ENCODE measurements at regions of chr9 and their contacts with region 1.

Region 1: GRCh38 chr9:122168356-122168755 is 8.6 kb downstream of the MORN5 start:
- DNase-seq: no peak
- H3K4me3 ChIP-seq: no peak overlapping the region
- H3K4me3 Mint-ChIP-seq: no peak overlapping the region
- H3K27ac ChIP-seq: no peak overlapping the region
- H3K27ac Mint-ChIP-seq: no peak overlapping the region
- H3K4me1 ChIP-seq: no peaks in the 10 kb centered on the region
- H3K4me1 Mint-ChIP-seq: no peaks in the 10 kb centered on the region
- H3K27me3 ChIP-seq: peaks cover 0 to 2% of the 10 kb centered on the region in 2 donors
- H3K27me3 Mint-ChIP-seq: peaks cover 15 to 18% (median 18%) of the 10 kb centered on the region in 3 donors
- CTCF ChIP-seq: no peak

Region 2: DNA sequence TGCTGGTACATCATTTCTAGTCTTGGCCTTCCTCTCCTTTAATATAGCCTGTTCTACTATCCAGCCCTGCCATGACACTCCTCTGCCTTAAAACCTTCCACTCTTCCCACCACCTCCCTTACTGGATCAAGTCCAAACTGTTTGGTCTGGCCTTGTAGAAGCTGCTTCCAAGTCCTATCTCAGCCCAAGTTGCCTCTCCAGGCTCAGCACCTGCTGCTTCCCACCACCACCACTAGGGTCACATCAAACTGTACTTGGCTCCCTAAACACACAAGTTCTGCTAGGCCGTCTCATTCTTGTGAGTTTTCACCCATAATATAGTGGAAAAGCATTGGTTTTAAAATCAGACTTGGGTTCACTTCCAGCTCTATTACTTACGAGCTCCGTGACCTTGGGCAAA is 10.2 kb before region 1 on chr9:
- intact Hi-C with region 1: no loop called
- DNase-seq: peak; percentile 14 to 29 (median 18)
- H3K4me3 ChIP-seq: no peak overlapping the region
- H3K4me3 Mint-ChIP-seq: no peak overlapping the region
- H3K27ac ChIP-seq: no peak overlapping the region
- H3K27ac Mint-ChIP-seq: peak overlapping the region in 2 of 7 donors; percentile 1 to 31
- H3K4me1 ChIP-seq: peaks cover 7 to 10% of the 10 kb centered on the region in 2 donors
- H3K4me1 Mint-ChIP-seq: peaks cover 33% of the 10 kb centered on the region
- H3K27me3 ChIP-seq: no peaks in the 10 kb centered on the region
- H3K27me3 Mint-ChIP-seq: peaks cover 4 to 8% (median 7%) of the 10 kb centered on the region in 3 donors
- CTCF ChIP-seq: peak; percentile 66

Region 3: DNA sequence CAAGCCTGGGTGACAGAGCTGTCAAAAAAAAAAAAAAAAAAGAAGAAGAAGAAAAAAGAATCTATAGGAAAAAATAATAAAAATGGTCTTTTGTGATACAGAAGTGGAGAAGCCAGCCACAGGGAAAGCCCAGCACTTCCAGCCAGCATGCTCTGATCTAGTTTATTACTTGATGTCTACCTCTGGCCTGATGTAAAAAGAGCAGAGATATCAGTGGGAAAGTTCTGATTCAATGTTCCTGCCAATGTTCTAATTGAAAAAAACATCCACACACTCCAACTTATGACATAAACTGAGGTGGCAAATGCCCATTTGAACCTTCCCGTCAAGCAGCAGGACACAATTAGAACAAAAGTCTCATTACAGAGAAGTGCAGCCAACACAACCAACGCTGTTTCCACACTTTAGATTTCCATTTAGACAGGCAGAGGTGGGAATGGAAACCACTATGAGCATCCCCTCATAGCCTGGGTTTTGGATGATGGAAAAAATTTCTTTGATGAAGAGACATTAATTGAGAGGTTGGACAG is 90.6 kb after region 1 on chr9:
- intact Hi-C with region 1: loop called (anchors 5 kb)
- DNase-seq: no peak
- H3K4me3 ChIP-seq: no peak overlapping the region
- H3K4me3 Mint-ChIP-seq: no peak overlapping the region
- H3K27ac ChIP-seq: no peak overlapping the region
- H3K27ac Mint-ChIP-seq: no peak overlapping the region
- H3K4me1 ChIP-seq: peaks cover 8 to 13% of the 10 kb centered on the region in 2 donors
- H3K4me1 Mint-ChIP-seq: peaks cover 17% of the 10 kb centered on the region
- H3K27me3 ChIP-seq: no peaks in the 10 kb centered on the region
- H3K27me3 Mint-ChIP-seq: no peaks in the 10 kb centered on the region
- CTCF ChIP-seq: no peak

Region 4: DNA sequence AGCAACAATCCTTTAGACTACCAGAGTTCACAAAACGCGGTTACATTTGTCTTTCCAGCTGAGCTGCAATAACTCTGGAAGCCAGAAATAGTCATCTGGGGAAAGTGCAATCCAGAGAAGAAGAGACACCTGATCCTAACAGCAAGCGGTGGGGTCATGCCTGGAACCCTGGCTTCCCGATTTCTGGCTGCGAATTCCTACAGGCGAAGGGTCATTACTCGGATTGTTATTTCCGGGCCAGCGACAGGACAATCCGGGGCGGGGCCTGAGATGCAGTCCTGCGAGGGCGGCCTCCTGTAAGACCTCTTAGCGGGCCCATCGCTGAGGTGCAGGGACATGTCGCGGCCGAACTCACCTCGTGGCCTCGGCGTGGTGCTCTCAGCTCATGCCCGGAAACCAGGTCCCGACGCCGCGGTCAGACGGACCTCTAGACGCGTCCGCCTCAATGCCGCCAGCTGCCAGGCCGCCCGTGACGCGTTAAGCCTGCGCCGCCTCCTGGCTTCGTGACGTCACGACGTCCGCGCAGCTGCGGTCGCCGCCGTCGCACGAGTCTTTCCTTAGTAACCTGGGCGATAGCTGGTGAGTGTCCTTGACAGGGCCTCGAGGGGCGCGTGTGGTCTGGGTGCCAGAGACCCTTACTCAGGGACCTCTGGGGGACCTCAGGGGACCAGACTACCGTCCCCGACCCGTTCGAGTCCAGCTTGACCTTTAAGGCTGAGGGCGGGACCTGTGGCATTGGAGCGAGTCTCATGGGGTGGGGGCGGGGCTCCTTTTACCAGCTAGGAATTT is 96.2 kb after region 1 on chr9 and contains the starts of genes MRRF and RBM18:
- intact Hi-C with region 1: loop called (anchors 5 kb)
- DNase-seq: peak; percentile 94 to 96 (median 96)
- H3K4me3 ChIP-seq: peak within 1 kb of the TSS; percentile 88 to 94 (median 89)
- H3K4me3 Mint-ChIP-seq: peak within 1 kb of the TSS; percentile 98 to 99
- H3K27ac ChIP-seq: peak within 1 kb of the TSS; percentile 84 to 100
- H3K27ac Mint-ChIP-seq: peak within 1 kb of the TSS; percentile 100
- H3K4me1 ChIP-seq: peaks cover 14 to 27% of the 10 kb centered on the region in 2 donors
- H3K4me1 Mint-ChIP-seq: peaks cover 27% of the 10 kb centered on the region
- H3K27me3 ChIP-seq: no peaks in the 10 kb centered on the region
- H3K27me3 Mint-ChIP-seq: no peaks in the 10 kb centered on the region
- CTCF ChIP-seq: no peak
- polyA plus RNA-seq, gene MRRF: 16.0 to 34.4 (median 16.2) TPM
- polyA plus RNA-seq, gene RBM18: 10.4 to 26.3 (median 25.3) TPM